Activated naive CD4-positive, alpha-beta T cell treated with anti-CD3 and anti-CD28 coated beads for 36 hours (primary cell): ENCODE measurements at regions of chr14 and their contacts with region 1.

Region 1: GRCh38 chr14:24195191-24196070 is at the start of gene TM9SF1:
- DNase-seq: peak; percentile 89
- H3K4me3 Mint-ChIP-seq: peak within 1 kb of the TSS; percentile 96
- H3K27ac Mint-ChIP-seq: peak within 1 kb of the TSS; percentile 93
- H3K4me1 Mint-ChIP-seq: peaks cover 56% of the 10 kb centered on the region
- H3K27me3 Mint-ChIP-seq: no peaks in the 10 kb centered on the region
- total RNA-seq, gene TM9SF1: 14.7 to 15.1 TPM

Region 2: DNA sequence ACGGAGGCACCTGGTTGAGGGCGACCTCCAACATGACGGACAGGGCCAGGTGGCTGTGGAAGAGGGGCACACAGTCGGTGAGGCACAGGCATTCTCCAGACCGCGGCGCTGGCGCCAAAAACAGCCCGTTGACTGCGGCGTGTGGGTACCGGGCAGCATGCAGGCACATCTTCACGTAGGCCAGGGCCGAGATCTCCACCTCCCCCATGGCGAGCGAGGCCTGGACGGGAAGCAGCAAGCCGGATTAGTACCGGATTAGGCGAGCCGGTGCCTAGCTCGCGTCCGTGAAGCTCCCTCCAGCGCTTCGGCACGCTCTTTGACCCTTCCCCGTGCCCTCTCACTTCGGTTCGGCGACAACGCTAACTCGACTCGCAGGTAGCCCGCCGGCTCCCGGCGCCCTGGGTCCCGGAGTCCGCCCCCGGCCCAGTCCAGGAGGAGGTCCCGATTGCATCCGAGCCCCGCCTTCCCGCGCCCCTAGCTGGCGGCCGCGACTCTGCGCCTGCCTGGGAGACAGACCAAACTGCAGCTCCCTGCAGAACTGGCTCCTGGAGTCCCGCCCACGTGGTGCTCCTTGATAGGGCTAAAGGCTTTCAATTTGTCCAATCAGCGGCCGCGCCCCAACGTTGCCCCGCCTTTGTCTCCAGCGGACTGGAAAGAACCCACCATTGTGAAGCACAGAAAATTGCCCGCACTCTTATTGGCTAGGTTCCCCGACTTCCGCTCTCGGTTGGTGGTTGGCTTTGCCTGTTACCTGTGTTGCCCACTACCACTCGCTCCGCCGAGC is 54.1 kb before region 1 on chr14 and contains the start of gene EMC9:
- CTCF ChIA-PET with region 1: no interaction called
- intact Hi-C with region 1: loop called (anchors 1 kb)
- DNase-seq: peak; percentile 100
- H3K4me3 Mint-ChIP-seq: peak within 1 kb of the TSS; percentile 99
- H3K27ac Mint-ChIP-seq: peak within 1 kb of the TSS; percentile 93
- H3K4me1 Mint-ChIP-seq: peaks cover 73% of the 10 kb centered on the region
- H3K27me3 Mint-ChIP-seq: no peaks in the 10 kb centered on the region
- total RNA-seq, gene EMC9: 38.4 to 38.9 TPM

Region 3: DNA sequence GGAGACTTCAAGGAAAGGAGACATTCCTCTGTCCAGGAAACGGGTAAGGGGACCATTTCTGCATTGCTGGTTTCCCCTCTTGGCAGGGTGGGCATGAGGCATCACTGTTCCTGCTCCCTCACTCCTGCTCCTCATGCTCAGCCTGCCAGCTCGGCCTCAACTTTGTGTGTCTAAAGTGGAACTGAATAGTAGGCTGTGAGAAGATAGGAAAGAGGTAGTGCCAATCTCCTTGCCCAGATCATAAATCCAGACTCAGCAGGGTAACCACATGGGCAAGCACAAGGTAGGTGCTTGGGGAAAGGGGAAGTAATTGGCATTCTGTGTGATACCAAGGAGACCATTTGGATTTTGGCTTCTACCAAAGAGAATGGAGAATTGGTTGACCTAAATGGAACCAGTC is 118.5 kb after region 1 on chr14:
- CTCF ChIA-PET with region 1: no interaction called
- intact Hi-C with region 1: no loop called
- DNase-seq: no peak
- H3K4me3 Mint-ChIP-seq: no peak overlapping the region
- H3K27ac Mint-ChIP-seq: no peak overlapping the region
- H3K4me1 Mint-ChIP-seq: peaks cover 69% of the 10 kb centered on the region
- H3K27me3 Mint-ChIP-seq: no peaks in the 10 kb centered on the region